Activated naive CD8-positive, alpha-beta T cell treated with anti-CD3 and anti-CD28 coated beads, Interleukin-2, amount 10 ng/mL, durations not matched to agents 7 days and 5 days (primary cell): ENCODE measurements at regions of chr19 and their contacts with region 1.

Region 1: GRCh38 chr19:16628183-16628983 is at the start of gene MED26:
- DNase-seq: peak; percentile 99
- ATAC-seq: peak; percentile 87
- H3K4me3 Mint-ChIP-seq: peak within 1 kb of the TSS; percentile 99
- H3K27ac Mint-ChIP-seq: peak within 1 kb of the TSS; percentile 99
- H3K4me1 Mint-ChIP-seq: peaks cover 38% of the 10 kb centered on the region
- H3K27me3 Mint-ChIP-seq: no peaks in the 10 kb centered on the region
- total RNA-seq, gene MED26: 16.4 to 21.2 TPM

Region 2: DNA sequence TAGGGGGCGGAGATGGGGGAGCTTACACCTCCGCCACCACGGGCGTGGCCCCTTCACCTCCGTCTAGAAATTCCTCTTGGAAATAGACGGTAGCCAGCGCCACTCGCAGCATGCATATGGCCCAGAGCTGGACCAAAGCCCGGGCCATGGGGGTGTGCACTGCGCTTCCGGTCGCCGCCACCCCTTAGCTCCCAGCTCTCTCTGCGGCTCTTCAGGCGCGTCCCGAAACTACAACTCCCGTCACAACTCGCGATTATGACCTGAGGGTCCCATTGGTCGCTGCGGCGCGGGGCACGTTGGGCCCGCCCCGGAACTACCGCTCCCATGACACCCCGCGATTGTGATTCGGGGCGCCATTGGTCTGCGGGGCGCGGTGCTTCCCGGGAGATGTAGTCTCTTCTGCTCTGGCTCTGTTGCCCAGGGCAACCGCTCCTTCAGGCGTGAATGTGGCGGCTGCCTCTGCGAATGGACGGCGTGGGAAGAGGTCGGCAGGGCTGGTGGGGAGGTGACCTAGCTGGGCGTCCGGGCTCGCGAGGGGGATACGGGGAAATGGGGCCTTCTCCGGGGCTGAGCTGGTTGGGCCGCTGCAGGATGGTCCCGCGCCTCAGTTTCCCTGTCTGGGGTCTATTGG is 132.3 kb before region 1 on chr19 and contains the starts of genes C19orf44 and CALR3:
- POLR2A ChIA-PET with region 1: interaction called, 13 read pairs
- DNase-seq: peak; percentile 95
- ATAC-seq: peak; percentile 98
- H3K4me3 Mint-ChIP-seq: peak within 1 kb of the TSS; percentile 88
- H3K27ac Mint-ChIP-seq: peak within 1 kb of the TSS; percentile 74
- H3K4me1 Mint-ChIP-seq: peaks cover 11% of the 10 kb centered on the region
- H3K27me3 Mint-ChIP-seq: no peaks in the 10 kb centered on the region
- total RNA-seq, gene C19orf44: 3.0 to 3.3 TPM
- total RNA-seq, gene CALR3: not detected

Region 3: GRCh38 chr19:16528073-16528472 is 100.3 kb before region 1 on chr19:
- POLR2A ChIA-PET with region 1: no interaction called
- DNase-seq: peak; percentile 59
- ATAC-seq: peak; percentile 42
- H3K4me3 Mint-ChIP-seq: no peak overlapping the region
- H3K27ac Mint-ChIP-seq: no peak overlapping the region
- H3K4me1 Mint-ChIP-seq: no peaks in the 10 kb centered on the region
- H3K27me3 Mint-ChIP-seq: no peaks in the 10 kb centered on the region

Region 4: GRCh38 chr19:16542045-16542909 is 86.1 kb before region 1 on chr19 and contains the start of gene CHERP:
- POLR2A ChIA-PET with region 1: interaction called, 28 read pairs
- DNase-seq: peak; percentile 95
- ATAC-seq: peak; percentile 87
- H3K4me3 Mint-ChIP-seq: peak within 1 kb of the TSS; percentile 95
- H3K27ac Mint-ChIP-seq: peak within 1 kb of the TSS; percentile 87
- H3K4me1 Mint-ChIP-seq: peaks cover 41% of the 10 kb centered on the region
- H3K27me3 Mint-ChIP-seq: no peaks in the 10 kb centered on the region
- total RNA-seq, gene CHERP: 65.5 to 67.0 TPM

Region 5: DNA sequence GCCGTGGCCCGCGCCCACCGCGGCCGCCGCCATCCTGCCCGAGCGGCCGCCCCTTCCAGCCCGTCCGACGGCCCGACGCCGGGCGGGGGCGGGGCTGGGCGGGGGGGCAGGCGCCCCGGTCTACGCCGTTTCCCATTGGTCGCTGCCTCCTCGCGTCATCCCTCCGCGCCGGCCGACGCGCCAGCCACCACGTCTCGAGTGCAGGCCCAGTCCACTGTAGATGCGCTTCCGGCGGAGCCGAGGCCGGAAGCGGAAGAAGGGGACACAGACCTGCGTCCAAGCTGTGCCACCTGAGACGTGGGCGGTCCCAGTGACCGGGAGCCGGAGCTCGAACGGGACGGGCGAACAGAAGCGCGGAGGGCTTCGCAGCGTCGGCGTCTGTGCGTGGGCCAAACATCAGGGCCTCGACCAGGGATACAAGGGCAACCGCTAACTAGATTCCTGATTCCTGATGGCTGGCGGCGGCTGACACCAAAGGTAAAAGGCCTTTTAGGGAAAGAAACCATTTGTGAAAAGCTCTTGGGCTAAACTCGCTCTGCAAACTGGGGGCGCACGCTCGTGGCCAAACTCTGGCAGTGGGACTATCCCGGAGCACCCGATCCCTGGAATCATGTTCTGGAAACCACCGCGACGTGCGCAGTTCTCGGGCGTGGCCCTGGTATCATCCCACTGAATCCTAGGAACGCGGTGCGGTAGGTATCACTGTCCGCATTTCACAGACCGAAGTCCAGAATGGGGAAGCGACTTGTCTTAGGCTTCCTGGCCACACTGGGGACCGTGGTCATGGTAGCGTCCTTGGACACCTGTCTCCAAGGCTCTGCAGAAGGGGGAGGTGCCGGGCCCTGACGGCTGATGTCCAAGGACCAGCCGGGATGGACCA is 55.8 kb before region 1 on chr19 and contains the start of gene SLC35E1:
- POLR2A ChIA-PET with region 1: interaction called, 30 read pairs
- DNase-seq: peak; percentile 93
- ATAC-seq: peak; percentile 91
- H3K4me3 Mint-ChIP-seq: peak within 1 kb of the TSS; percentile 98
- H3K27ac Mint-ChIP-seq: peak within 1 kb of the TSS; percentile 99
- H3K4me1 Mint-ChIP-seq: peaks cover 41% of the 10 kb centered on the region
- H3K27me3 Mint-ChIP-seq: no peaks in the 10 kb centered on the region
- total RNA-seq, gene SLC35E1: 43.4 to 44.5 TPM

Region 6: DNA sequence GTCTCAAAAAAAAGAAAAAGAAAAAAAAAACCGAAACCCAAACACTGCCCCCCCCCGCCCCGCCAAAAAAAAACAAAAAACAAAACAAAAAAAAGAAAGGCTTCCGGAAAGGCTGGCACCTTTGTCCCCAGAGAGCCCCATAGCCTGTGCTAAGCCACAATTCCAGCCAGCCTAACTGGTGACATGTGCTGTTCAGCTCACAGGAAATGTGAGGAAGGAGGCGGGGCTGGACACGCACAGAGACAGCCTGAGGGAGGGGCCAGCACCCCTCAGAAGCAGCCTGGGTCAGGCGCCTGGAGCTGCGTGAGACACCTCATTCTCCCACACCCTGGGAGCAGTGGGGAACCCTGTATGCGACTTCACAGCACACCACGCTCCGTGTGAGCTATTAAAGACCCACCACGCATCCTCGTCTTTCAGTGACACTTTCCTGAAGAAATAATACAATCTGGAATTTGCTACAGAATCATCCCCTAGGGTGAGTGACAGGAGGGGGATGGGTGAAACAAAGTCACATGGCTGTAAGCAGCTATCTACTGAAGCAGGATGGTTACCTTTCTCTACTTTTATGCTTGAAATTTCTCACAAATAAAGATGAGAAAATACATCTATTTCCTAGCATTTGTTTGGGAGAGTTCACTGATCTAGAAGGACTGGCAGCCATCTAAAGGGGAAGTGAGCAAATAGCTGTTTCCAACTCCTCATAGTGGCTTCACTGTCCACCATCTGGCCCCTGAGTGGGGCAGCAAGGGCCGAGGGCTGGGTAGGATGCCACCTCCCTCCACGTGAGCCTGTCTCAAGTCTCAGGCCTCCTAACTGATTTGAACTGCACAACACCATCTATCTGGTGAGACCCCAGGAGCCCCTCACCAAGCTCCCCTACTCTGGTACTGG is 43.9 kb before region 1 on chr19:
- POLR2A ChIA-PET with region 1: interaction called, 66 read pairs
- DNase-seq: peak; percentile 82
- ATAC-seq: peak; percentile 82
- H3K4me3 Mint-ChIP-seq: peak overlapping the region; percentile 86
- H3K27ac Mint-ChIP-seq: peak overlapping the region; percentile 93
- H3K4me1 Mint-ChIP-seq: peaks cover 62% of the 10 kb centered on the region
- H3K27me3 Mint-ChIP-seq: no peaks in the 10 kb centered on the region

Region 7: GRCh38 chr19:16599655-16600346 is 28.6 kb before region 1 on chr19:
- POLR2A ChIA-PET with region 1: no interaction called
- DNase-seq: no peak
- ATAC-seq: no peak
- H3K4me3 Mint-ChIP-seq: no peak overlapping the region
- H3K27ac Mint-ChIP-seq: no peak overlapping the region
- H3K4me1 Mint-ChIP-seq: peaks cover 32% of the 10 kb centered on the region
- H3K27me3 Mint-ChIP-seq: no peaks in the 10 kb centered on the region

Region 8: GRCh38 chr19:16659831-16660708 is 31.7 kb after region 1 on chr19 and contains the start of gene SMIM7:
- POLR2A ChIA-PET with region 1: interaction called, 27 read pairs
- DNase-seq: peak; percentile 96
- ATAC-seq: peak; percentile 99
- H3K4me3 Mint-ChIP-seq: peak within 1 kb of the TSS; percentile 99
- H3K27ac Mint-ChIP-seq: peak within 1 kb of the TSS; percentile 98
- H3K4me1 Mint-ChIP-seq: peaks cover 30% of the 10 kb centered on the region
- H3K27me3 Mint-ChIP-seq: peaks cover 17% of the 10 kb centered on the region
- total RNA-seq, gene SMIM7: 63.6 to 68.8 TPM